ENCODE measurements at regions of chrX and their contacts with region 1.

Region 1: DNA sequence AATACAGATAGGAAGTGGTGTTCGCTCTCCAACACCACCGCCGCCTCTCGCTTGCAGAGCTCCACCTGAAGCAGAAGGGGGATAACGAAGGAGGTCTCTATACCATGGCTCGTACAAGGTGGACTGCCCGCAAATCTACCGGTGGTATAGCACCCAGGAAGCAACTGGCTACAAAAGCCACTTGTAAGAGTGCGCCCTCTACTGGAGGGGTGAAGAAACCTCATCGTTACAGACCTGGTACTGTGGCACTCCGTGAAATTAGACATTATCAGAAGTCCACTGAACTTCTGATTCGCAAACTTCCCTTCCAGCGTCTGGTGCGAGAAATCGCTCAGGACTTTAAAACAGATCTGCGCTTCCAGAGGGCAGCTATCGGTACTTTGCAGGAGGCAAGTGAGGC is 5.2 kb upstream of the BMP15 start:
- DNase-seq: peak in 1 of 2 experiments; percentile 49
- H3K4me3 ChIP-seq: no peak overlapping the region
- H3K27ac ChIP-seq: no peak overlapping the region
- H3K4me1 ChIP-seq: no peaks in the 10 kb centered on the region
- H3K27me3 ChIP-seq: no peaks in the 10 kb centered on the region
- CTCF ChIP-seq: peak in 2 of 3 experiments; percentile 16 to 42; a peak in 2 of 4 replicates
- EP300 ChIP-seq: no peak
- POLR2A ChIP-seq: no peak
- RAD21 ChIP-seq: peak; percentile 21 to 26; a peak in 1 of 4 replicates

Region 2: DNA sequence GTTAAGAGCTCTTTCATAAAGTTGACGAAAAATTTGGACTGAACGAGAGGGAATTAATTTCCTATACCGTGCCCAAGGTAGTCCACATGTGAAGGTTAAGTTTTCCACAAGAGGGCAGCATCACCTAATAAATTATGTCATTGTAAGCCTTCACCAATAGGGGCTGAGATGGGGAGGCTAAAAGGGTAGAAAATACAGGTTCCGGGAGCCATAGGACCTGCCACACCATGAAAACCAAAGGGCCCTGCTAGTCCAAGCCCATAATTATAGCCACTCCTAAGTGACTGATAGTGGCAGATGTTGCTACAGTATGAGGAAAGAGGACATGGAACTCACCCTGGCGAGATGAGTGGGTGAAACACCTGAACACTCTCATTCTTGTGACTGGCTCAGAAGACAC is 213.5 kb before region 1 on chrX:
- CTCF ChIA-PET with region 1: interaction called, 12 read pairs
- POLR2A ChIA-PET with region 1: no interaction called
- DNase-seq: no peak
- H3K4me3 ChIP-seq: no peak overlapping the region
- H3K27ac ChIP-seq: no peak overlapping the region
- H3K4me1 ChIP-seq: no peaks in the 10 kb centered on the region
- H3K27me3 ChIP-seq: no peaks in the 10 kb centered on the region
- CTCF ChIP-seq: peak in 2 of 3 experiments; percentile 51 to 83; a peak in 3 of 4 replicates
- EP300 ChIP-seq: no peak
- POLR2A ChIP-seq: no peak
- RAD21 ChIP-seq: peak; percentile 73 to 78

Region 3: GRCh38 chrX:50747471-50747900 is 157.8 kb before region 1 on chrX:
- CTCF ChIA-PET with region 1: interaction called, 30 read pairs
- POLR2A ChIA-PET with region 1: no interaction called
- DNase-seq: no peak
- H3K4me3 ChIP-seq: no peak overlapping the region
- H3K27ac ChIP-seq: no peak overlapping the region
- H3K4me1 ChIP-seq: no peaks in the 10 kb centered on the region
- H3K27me3 ChIP-seq: no peaks in the 10 kb centered on the region
- CTCF ChIP-seq: peak in 2 of 3 experiments; percentile 61 to 75; a peak in 3 of 4 replicates
- EP300 ChIP-seq: no peak
- POLR2A ChIP-seq: no peak
- RAD21 ChIP-seq: peak; percentile 81 to 86

Region 4: GRCh38 chrX:50889582-50889981 is 15.8 kb before region 1 on chrX:
- CTCF ChIA-PET with region 1: interaction called, 13 read pairs
- POLR2A ChIA-PET with region 1: no interaction called
- DNase-seq: peak in 1 of 2 experiments; percentile 53
- H3K4me3 ChIP-seq: no peak overlapping the region
- H3K27ac ChIP-seq: no peak overlapping the region
- H3K4me1 ChIP-seq: no peaks in the 10 kb centered on the region
- H3K27me3 ChIP-seq: no peaks in the 10 kb centered on the region
- CTCF ChIP-seq: peak; percentile 39 to 77 (median 60)
- EP300 ChIP-seq: no peak
- POLR2A ChIP-seq: no peak
- RAD21 ChIP-seq: peak; percentile 30 to 47; a peak in 3 of 4 replicates

Region 5: DNA sequence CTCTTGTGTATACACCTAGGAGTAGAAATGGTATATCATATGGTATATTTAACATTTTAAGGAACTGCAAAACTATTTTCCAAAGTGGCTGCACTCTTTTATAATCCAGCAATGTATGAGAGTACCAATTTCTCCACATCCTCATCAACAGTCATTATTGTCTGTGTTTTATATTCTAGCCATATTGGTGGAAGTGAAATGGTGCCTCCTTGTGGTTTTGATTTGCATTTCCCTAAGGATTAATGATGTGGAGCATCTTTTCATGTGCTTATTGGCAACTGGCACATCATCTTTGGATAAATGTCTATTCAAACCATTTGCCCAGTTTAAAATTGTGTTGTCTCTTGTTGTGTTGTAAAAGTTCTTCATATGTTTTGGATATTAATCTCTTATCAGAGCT is 14.8 kb after region 1 on chrX:
- CTCF ChIA-PET with region 1: interaction called, 18 read pairs
- POLR2A ChIA-PET with region 1: no interaction called
- DNase-seq: no peak
- H3K4me3 ChIP-seq: no peak overlapping the region
- H3K27ac ChIP-seq: no peak overlapping the region
- H3K4me1 ChIP-seq: no peaks in the 10 kb centered on the region
- H3K27me3 ChIP-seq: no peaks in the 10 kb centered on the region
- CTCF ChIP-seq: peak in 2 of 3 experiments; percentile 20 to 46; a peak in 2 of 4 replicates
- EP300 ChIP-seq: no peak
- POLR2A ChIP-seq: no peak
- RAD21 ChIP-seq: peak; percentile 51 to 60